CD4-positive, alpha-beta T cell (primary cell): ENCODE measurements at regions of chr22 and their contacts with region 1.

Region 1: DNA sequence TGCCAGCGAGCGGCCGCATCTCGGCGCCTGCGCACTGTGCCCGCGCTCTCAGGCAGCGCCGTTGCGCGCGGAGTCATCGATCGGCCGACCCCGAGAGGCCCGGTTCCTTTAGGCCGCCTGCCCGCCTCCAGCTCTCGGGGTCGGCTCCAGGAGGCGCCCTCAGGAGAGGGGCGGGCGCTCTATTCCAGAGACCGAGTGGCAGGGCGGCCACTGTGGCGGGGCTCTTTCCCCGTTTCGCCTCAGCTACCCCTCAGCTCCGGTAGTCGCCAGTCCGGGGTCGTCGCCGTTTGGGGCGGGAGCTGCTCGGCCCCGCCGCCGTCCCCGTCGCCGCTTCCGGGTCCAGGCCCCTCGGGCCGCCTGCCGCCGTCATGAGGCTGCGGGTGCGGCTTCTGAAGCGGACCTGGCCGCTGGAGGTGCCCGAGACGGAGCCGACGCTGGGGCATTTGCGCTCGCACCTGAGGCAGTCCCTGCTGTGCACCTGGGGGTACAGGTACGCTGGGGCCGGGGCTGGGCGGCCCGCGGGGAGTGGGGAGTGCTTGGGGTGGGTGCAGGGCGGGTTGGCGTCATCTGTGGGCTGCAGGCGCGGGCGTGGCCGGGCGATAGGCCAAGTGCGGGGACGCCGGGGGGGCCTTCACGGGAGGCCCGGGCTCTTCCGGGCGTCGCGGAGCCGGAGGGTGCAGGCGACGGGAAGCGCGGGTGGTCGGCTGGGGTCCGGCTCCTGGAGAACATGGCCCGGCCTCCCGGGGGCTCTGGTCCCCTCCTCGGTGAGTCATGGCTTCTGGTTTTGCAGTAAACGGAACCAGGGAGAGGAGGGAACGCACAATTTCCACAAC is at the start of gene FBXO7:
- DNase-seq: peak; percentile 68 to 94 (median 82)
- ATAC-seq: peak; percentile 82
- H3K4me3 ChIP-seq: peak within 1 kb of the TSS; percentile 91
- H3K4me3 Mint-ChIP-seq: peak within 1 kb of the TSS; percentile 95
- H3K27ac ChIP-seq: peak within 1 kb of the TSS; percentile 84 to 95
- H3K27ac Mint-ChIP-seq: no peak within 1 kb of the TSS
- H3K4me1 ChIP-seq: peaks cover 20% of the 10 kb centered on the region
- H3K4me1 Mint-ChIP-seq: peaks cover 26% of the 10 kb centered on the region
- H3K27me3 ChIP-seq: no peaks in the 10 kb centered on the region
- H3K27me3 Mint-ChIP-seq: no peaks in the 10 kb centered on the region
- CTCF ChIP-seq: peak; percentile 23
- total RNA-seq, gene FBXO7: 161 to 169 TPM

Region 2: GRCh38 chr22:31122532-31123291 is 1352.1 kb before region 1 on chr22 and contains the start of gene INPP5J:
- CTCF ChIA-PET with region 1: no interaction called
- POLR2A ChIA-PET with region 1: no interaction called
- intact Hi-C with region 1: no loop called
- DNase-seq: no peak
- ATAC-seq: no peak
- H3K4me3 ChIP-seq: no peak within 1 kb of the TSS
- H3K4me3 Mint-ChIP-seq: no peak within 1 kb of the TSS
- H3K27ac ChIP-seq: no peak within 1 kb of the TSS
- H3K27ac Mint-ChIP-seq: no peak within 1 kb of the TSS
- H3K4me1 ChIP-seq: no peaks in the 10 kb centered on the region
- H3K4me1 Mint-ChIP-seq: no peaks in the 10 kb centered on the region
- H3K27me3 ChIP-seq: peaks cover 2 to 7% of the 10 kb centered on the region in 2 experiments
- H3K27me3 Mint-ChIP-seq: peaks cover 3% of the 10 kb centered on the region
- CTCF ChIP-seq: no peak
- total RNA-seq, gene INPP5J: 0.59 to 0.69 TPM

Region 3: GRCh38 chr22:31661851-31662656 is 812.8 kb before region 1 on chr22 and contains the start of gene PISD:
- CTCF ChIA-PET with region 1: no interaction called
- POLR2A ChIA-PET with region 1: no interaction called
- intact Hi-C with region 1: loop called (anchors 10 kb)
- DNase-seq: peak; percentile 92 to 99 (median 96)
- ATAC-seq: peak; percentile 90
- H3K4me3 ChIP-seq: peak within 1 kb of the TSS; percentile 95
- H3K4me3 Mint-ChIP-seq: peak within 1 kb of the TSS; percentile 99
- H3K27ac ChIP-seq: peak within 1 kb of the TSS; percentile 62 to 70
- H3K27ac Mint-ChIP-seq: peak within 1 kb of the TSS; percentile 98
- H3K4me1 ChIP-seq: peaks cover 29% of the 10 kb centered on the region
- H3K4me1 Mint-ChIP-seq: peaks cover 38% of the 10 kb centered on the region
- H3K27me3 ChIP-seq: no peaks in the 10 kb centered on the region
- H3K27me3 Mint-ChIP-seq: no peaks in the 10 kb centered on the region
- CTCF ChIP-seq: no peak
- total RNA-seq, gene PISD: 23.4 to 25.3 TPM

Region 4: GRCh38 chr22:31977141-31977841 is 497.6 kb before region 1 on chr22:
- CTCF ChIA-PET with region 1: interaction called, 3 read pairs
- POLR2A ChIA-PET with region 1: no interaction called
- intact Hi-C with region 1: loop called (anchors 1 to 2 kb)
- DNase-seq: peak; percentile 58 to 84 (median 74)
- ATAC-seq: peak; percentile 95
- H3K4me3 ChIP-seq: no peak overlapping the region
- H3K4me3 Mint-ChIP-seq: no peak overlapping the region
- H3K27ac ChIP-seq: no peak overlapping the region
- H3K27ac Mint-ChIP-seq: no peak overlapping the region
- H3K4me1 ChIP-seq: no peaks in the 10 kb centered on the region
- H3K4me1 Mint-ChIP-seq: no peaks in the 10 kb centered on the region
- H3K27me3 ChIP-seq: no peaks in the 10 kb centered on the region
- H3K27me3 Mint-ChIP-seq: no peaks in the 10 kb centered on the region
- CTCF ChIP-seq: peak; percentile 71

Region 5: DNA sequence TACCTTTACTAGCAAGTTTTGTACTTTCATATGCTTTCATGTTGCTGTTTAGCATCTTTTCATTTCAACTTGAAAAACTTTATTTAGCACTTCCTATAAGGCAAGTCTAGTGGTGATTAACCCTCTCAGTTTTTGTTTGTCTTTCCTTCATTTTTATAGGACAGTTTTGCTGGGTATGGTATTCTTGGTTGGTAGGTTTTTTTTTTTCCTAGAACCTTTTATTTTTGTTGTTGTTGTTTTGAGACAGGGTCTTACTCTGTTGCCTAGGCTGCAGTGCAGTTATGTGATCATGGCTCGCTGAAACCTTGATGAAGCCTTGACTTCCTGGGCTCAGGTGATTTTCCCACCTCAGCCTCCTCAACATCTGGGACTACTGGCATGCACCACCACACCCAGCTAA is 461.7 kb before region 1 on chr22:
- CTCF ChIA-PET with region 1: no interaction called
- POLR2A ChIA-PET with region 1: no interaction called
- intact Hi-C with region 1: no loop called
- DNase-seq: no peak
- ATAC-seq: no peak
- H3K4me3 ChIP-seq: no peak overlapping the region
- H3K4me3 Mint-ChIP-seq: no peak overlapping the region
- H3K27ac ChIP-seq: no peak overlapping the region
- H3K27ac Mint-ChIP-seq: no peak overlapping the region
- H3K4me1 ChIP-seq: no peaks in the 10 kb centered on the region
- H3K4me1 Mint-ChIP-seq: no peaks in the 10 kb centered on the region
- H3K27me3 ChIP-seq: peaks cover 0 to 4% of the 10 kb centered on the region in 2 experiments
- H3K27me3 Mint-ChIP-seq: peaks cover 13% of the 10 kb centered on the region
- CTCF ChIP-seq: no peak

Region 6: DNA sequence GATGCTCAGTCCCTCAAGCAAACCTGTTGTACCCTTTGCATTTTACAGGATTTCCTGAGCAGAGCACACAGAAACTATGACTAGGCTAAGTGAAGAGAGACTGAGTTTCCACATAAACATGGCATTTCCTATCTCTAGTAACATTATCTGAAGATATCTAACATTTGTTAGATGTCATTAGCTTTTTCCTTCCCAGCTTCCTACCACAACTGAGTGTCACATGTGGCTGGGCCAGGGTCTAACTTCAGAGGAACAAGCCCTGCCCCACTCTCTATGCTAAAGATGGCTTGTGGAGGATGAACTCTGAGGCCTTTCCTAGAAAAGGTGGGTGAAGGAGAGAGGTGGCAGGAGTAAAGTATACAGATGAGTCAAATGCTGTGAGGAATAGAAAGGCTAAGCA is 332.3 kb before region 1 on chr22:
- CTCF ChIA-PET with region 1: no interaction called
- POLR2A ChIA-PET with region 1: no interaction called
- intact Hi-C with region 1: loop called in 1 of 2 experiments (anchors 2 kb)
- DNase-seq: peak in 1 of 14 experiments; percentile 17
- ATAC-seq: no peak
- H3K4me3 ChIP-seq: no peak overlapping the region
- H3K4me3 Mint-ChIP-seq: no peak overlapping the region
- H3K27ac ChIP-seq: no peak overlapping the region
- H3K27ac Mint-ChIP-seq: peak overlapping the region; percentile 67
- H3K4me1 ChIP-seq: peaks cover 36% of the 10 kb centered on the region
- H3K4me1 Mint-ChIP-seq: peaks cover 44% of the 10 kb centered on the region
- H3K27me3 ChIP-seq: no peaks in the 10 kb centered on the region
- H3K27me3 Mint-ChIP-seq: no peaks in the 10 kb centered on the region
- CTCF ChIP-seq: no peak

Region 7: GRCh38 chr22:32265882-32266767 is 208.7 kb before region 1 on chr22:
- CTCF ChIA-PET with region 1: interaction called, 3 read pairs
- POLR2A ChIA-PET with region 1: no interaction called
- intact Hi-C with region 1: loop called in 1 of 2 experiments (anchors 10 kb)
- DNase-seq: peak; percentile 40 to 81 (median 56)
- ATAC-seq: peak; percentile 66
- H3K4me3 ChIP-seq: no peak overlapping the region
- H3K4me3 Mint-ChIP-seq: no peak overlapping the region
- H3K27ac ChIP-seq: no peak overlapping the region
- H3K27ac Mint-ChIP-seq: no peak overlapping the region
- H3K4me1 ChIP-seq: peaks cover 4% of the 10 kb centered on the region
- H3K4me1 Mint-ChIP-seq: peaks cover 10% of the 10 kb centered on the region
- H3K27me3 ChIP-seq: no peaks in the 10 kb centered on the region
- H3K27me3 Mint-ChIP-seq: peaks cover 9% of the 10 kb centered on the region
- CTCF ChIP-seq: peak; percentile 86

Region 8: DNA sequence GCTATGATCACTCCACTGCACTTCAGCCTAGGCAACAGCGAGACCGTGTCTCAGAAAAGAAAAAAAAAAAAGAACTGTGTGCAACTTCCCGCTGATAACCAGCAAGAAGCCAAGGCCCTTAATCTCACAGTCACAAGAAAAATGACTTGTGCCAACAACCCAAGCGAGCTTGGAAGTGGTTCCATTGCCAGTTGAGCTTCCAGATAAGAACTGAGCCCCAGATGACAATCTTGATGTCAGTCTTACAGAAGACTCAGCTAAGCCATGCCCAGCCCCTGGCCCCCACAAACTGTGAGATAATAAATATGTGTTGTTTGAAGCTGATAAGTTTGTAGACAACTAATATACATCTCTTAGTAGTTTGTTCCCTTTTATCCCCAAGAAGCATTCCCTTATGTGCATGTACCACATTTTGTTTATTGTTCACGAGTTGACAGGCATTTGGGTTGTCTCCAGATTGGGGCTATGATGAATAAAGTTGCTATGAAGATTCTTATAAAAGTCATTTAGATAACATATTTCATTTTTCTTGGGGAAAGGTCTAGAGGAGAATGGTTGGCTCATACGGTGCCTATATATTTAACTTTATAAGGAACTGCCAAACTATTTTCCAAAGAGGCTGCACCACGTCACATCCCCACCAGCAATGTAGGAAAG is 412.6 kb after region 1 on chr22:
- CTCF ChIA-PET with region 1: no interaction called
- POLR2A ChIA-PET with region 1: no interaction called
- intact Hi-C with region 1: no loop called
- DNase-seq: no peak
- ATAC-seq: no peak
- H3K4me3 ChIP-seq: no peak overlapping the region
- H3K4me3 Mint-ChIP-seq: no peak overlapping the region
- H3K27ac ChIP-seq: no peak overlapping the region
- H3K27ac Mint-ChIP-seq: no peak overlapping the region
- H3K4me1 ChIP-seq: no peaks in the 10 kb centered on the region
- H3K4me1 Mint-ChIP-seq: peaks cover under 1% of the 10 kb centered on the region
- H3K27me3 ChIP-seq: peaks cover 2 to 4% of the 10 kb centered on the region in 2 experiments
- H3K27me3 Mint-ChIP-seq: peaks cover 3% of the 10 kb centered on the region
- CTCF ChIP-seq: no peak

Region 9: GRCh38 chr22:33710326-33710725 is 1235.5 kb after region 1 on chr22:
- CTCF ChIA-PET with region 1: no interaction called
- POLR2A ChIA-PET with region 1: no interaction called
- intact Hi-C with region 1: no loop called
- DNase-seq: no peak
- ATAC-seq: no peak
- H3K4me3 ChIP-seq: no peak overlapping the region
- H3K4me3 Mint-ChIP-seq: no peak overlapping the region
- H3K27ac ChIP-seq: no peak overlapping the region
- H3K27ac Mint-ChIP-seq: no peak overlapping the region
- H3K4me1 ChIP-seq: no peaks in the 10 kb centered on the region
- H3K4me1 Mint-ChIP-seq: no peaks in the 10 kb centered on the region
- H3K27me3 ChIP-seq: no peaks in the 10 kb centered on the region
- H3K27me3 Mint-ChIP-seq: no peaks in the 10 kb centered on the region
- CTCF ChIP-seq: no peak